ENCODE measurements at regions of chr1 and their contacts with region 1.

Region 1: GRCh38 chr1:39691262-39692151 is at the start of gene HPCAL4:
- DNase-seq: peak; percentile 90 to 94
- ATAC-seq: peak; percentile 82 to 84 (median 84)
- H3K4me3 ChIP-seq: peak within 1 kb of the TSS; percentile 53
- H3K27ac ChIP-seq: no peak within 1 kb of the TSS
- H3K4me1 ChIP-seq: peaks cover 34% of the 10 kb centered on the region
- H3K27me3 ChIP-seq: peaks cover 0 to 5% (median 0%) of the 10 kb centered on the region in 3 donors
- CTCF ChIP-seq: no peak
- total RNA-seq, gene HPCAL4: 1.3 to 9.4 (median 3.1) TPM

Region 2: GRCh38 chr1:39672551-39672947 is 19.0 kb before region 1 on chr1:
- intact Hi-C with region 1: loop called (anchors 2 kb)
- DNase-seq: no peak
- ATAC-seq: peak; percentile 17 to 63 (median 38)
- H3K4me3 ChIP-seq: peak overlapping the region; percentile 73
- H3K27ac ChIP-seq: peak overlapping the region; percentile 89
- H3K4me1 ChIP-seq: peaks cover 69% of the 10 kb centered on the region
- H3K27me3 ChIP-seq: no peaks in the 10 kb centered on the region
- CTCF ChIP-seq: peak; percentile 45